AG04449 (cell line): ENCODE measurements at regions of chr17 and their contacts with region 1.

Region 1: DNA sequence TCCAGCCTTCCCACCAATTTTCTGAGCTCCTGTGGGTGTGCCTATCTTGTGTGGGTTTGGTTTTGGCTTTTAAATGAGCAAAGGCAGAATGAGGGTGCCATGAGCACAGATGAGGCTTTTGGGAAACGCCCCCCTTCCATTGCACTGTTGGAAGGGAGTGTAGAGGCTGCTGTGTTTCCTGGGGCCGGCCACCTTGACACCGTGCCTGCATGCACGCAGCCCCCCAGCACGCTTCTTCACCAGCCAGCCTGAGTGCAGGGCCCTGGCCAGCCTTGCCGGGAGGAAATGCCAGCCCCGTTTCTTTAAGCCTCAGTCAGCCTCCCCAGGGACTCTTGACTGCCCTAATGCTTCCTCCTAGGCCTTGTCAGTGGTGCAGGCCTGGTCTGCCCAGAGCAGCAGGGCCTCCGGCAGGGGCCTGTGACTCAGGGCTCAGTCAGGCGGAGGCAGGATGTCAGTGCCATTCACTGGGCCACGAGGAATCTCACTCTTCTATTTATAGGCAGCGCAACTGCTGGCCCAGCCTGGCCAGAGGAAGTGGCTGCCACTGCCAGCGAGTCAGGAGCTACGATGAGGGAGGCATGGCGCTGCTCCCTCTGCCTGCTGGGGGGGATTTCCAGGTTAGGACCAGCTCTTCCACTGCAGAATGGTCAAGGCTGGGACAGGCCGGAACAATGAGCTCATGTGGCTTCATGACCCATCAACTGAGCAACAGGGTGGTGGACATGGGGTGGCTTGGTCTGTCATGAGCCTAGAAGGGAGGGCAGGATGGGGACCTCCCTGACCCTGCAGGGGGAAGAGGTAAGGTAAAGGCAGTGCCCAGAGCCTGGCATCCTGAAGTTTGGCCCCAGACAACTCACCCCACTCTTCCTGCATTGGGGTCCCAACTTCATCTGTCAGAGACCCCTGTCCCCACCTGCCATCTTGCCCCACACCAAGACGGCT is 205.2 kb downstream of the RAB11FIP4 start:
- DNase-seq: peak; percentile 97
- H3K4me3 ChIP-seq: no peak overlapping the region
- CTCF ChIP-seq: no peak

Region 2: DNA sequence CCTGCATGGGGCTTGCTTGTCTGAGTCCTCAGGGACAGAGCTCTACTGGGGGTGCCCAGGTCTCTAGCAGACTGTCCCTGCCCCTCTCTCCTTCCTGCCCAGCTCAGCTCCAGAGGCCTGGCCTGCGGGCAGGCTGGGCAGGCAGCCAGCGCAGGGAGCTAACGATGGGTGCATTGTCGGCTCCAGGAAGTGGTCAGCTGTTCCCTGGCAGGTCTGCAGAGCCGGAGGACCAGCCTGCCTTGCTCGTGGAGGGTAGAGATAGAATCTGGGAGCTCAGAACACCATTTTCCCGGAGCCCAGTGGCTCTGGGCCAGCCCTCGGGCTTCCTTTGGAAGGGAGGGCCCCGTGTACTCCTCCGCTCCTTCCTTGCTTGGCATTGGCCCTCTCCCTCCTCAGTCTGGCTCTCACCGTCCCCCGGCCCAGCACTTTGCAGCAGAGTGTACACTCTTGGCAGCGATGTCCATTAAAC is 15.6 kb before region 1 on chr17:
- CTCF ChIA-PET with region 1: no interaction called
- POLR2A ChIA-PET with region 1: interaction called, 11 read pairs
- DNase-seq: no peak
- H3K4me3 ChIP-seq: no peak overlapping the region
- CTCF ChIP-seq: no peak